ENCODE measurements at regions of chr14 and their contacts with region 1.

Region 1: DNA sequence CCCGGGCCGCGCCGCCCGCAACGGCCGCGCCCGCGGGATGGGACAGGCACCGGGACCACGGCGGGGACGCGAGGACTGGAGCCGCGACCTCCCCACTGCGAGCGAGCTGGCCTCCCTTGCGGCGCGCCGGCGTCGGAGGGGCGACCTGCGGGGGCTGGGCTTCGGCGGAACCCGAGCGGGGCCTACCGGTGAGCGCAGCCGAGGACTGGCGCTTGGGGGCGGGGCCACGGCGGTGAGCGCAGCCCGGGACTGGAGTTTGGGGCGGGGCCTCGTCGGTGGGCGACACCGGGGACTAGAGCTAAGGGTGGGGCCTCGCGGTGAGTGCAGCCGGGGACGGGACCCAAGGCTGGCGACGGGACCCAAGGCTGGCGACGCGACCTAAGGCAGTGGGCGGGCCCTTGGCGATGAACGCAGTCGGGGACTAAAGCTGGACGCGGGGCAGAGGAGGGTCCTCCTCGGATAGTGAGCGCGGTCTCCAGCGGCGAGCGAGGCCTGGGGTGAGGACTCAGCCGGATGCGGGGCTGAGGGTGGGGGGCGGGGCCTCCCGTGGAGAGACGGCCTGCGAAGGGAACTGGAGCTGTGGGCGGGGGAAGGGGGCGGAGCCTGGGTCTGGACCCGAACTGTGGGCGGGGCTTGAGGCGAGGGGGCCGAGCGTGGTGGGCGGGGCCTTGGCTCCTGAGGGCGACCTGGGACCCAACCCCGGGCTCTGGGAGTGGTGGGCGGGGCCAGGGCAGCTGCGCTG is at the start of gene BRF1:
- DNase-seq: peak; percentile 100
- ATAC-seq: peak; percentile 92
- H3K4me3 Mint-ChIP-seq: peak within 1 kb of the TSS; percentile 86
- H3K27ac Mint-ChIP-seq: peak within 1 kb of the TSS; percentile 86
- H3K4me1 Mint-ChIP-seq: peaks cover 39% of the 10 kb centered on the region
- H3K27me3 Mint-ChIP-seq: no peaks in the 10 kb centered on the region
- total RNA-seq, gene BRF1: 20.0 to 28.1 TPM

Region 2: GRCh38 chr14:104826189-104826860 is 474.6 kb before region 1 on chr14:
- CTCF ChIA-PET with region 1: no interaction called
- POLR2A ChIA-PET with region 1: no interaction called
- intact Hi-C with region 1: loop called in 1 of 2 experiments (anchors 2 kb)
- DNase-seq: peak; percentile 97
- ATAC-seq: peak; percentile 93
- H3K4me3 Mint-ChIP-seq: peak overlapping the region; percentile 73
- H3K27ac Mint-ChIP-seq: no peak overlapping the region
- H3K4me1 Mint-ChIP-seq: peaks cover 13% of the 10 kb centered on the region
- H3K27me3 Mint-ChIP-seq: peaks cover 13% of the 10 kb centered on the region

Region 3: DNA sequence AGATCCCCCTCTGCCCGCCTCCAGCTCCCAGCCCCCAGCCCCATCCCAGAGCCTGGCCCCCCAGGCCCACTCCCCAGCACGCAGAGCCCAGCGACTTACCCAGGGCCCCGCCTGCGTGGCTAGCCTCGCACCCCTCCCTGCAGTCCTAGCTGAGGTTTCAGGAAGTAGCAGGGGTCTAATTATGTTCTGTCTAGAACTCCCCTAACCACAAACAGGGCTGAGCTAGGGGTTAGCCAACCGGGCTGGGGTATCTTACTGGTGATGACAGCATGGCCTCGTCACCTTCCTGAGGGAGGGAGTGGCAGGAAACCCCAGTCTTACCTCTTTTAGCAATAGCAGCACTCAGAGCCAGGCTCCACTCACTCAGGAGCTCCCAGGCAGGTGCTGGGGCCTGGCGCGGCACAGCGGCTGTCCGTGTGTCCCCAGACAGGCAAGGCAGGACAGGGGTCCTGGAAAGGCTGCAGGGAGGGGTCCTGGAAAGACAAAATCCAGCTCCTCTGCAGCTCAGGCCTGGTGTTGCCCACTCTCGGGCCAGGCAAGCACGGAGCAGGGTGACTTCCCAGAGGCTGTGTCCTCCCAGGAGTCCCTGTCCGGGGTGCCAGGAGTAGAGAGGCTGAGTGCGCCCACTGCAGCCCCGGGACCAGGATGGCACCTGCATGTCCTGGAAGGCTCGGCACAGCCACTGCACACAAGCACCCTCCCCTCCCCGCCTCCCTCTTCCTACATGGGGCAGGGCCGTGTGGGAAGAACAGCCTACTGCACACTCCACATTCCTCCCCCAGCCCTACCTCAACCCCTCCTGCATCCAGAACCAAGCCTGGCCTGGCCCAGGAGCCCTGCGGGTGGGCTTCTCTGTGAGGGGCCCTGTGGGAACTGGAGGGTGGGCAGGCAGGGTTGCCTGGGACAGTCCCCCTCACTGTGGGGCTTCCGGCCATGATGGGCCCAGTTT is 235.4 kb before region 1 on chr14 and contains the start of gene GPR132:
- CTCF ChIA-PET with region 1: no interaction called
- POLR2A ChIA-PET with region 1: no interaction called
- intact Hi-C with region 1: loop called in 1 of 2 experiments (anchors 2 kb)
- DNase-seq: peak; percentile 93
- ATAC-seq: peak; percentile 78
- H3K4me3 Mint-ChIP-seq: peak within 1 kb of the TSS; percentile 92
- H3K27ac Mint-ChIP-seq: peak within 1 kb of the TSS; percentile 96
- H3K4me1 Mint-ChIP-seq: peaks cover 74% of the 10 kb centered on the region
- H3K27me3 Mint-ChIP-seq: no peaks in the 10 kb centered on the region
- total RNA-seq, gene GPR132: 27.7 to 35.4 TPM

Region 4: GRCh38 chr14:105248368-105248756 is 52.6 kb before region 1 on chr14 and contains the start of gene BTBD6:
- CTCF ChIA-PET with region 1: no interaction called
- POLR2A ChIA-PET with region 1: interaction called, 3 read pairs
- intact Hi-C with region 1: loop called in 1 of 2 experiments (anchors 1 kb)
- DNase-seq: peak; percentile 93
- ATAC-seq: peak; percentile 97
- H3K4me3 Mint-ChIP-seq: peak within 1 kb of the TSS; percentile 74
- H3K27ac Mint-ChIP-seq: peak within 1 kb of the TSS; percentile 51
- H3K4me1 Mint-ChIP-seq: peaks cover 15% of the 10 kb centered on the region
- H3K27me3 Mint-ChIP-seq: no peaks in the 10 kb centered on the region
- total RNA-seq, gene BTBD6: 18.9 to 23.2 TPM

Region 5: GRCh38 chr14:105267820-105268548 is 33.0 kb before region 1 on chr14:
- CTCF ChIA-PET with region 1: no interaction called
- POLR2A ChIA-PET with region 1: no interaction called
- intact Hi-C with region 1: no loop called
- DNase-seq: no peak
- ATAC-seq: no peak
- H3K4me3 Mint-ChIP-seq: no peak overlapping the region
- H3K27ac Mint-ChIP-seq: no peak overlapping the region
- H3K4me1 Mint-ChIP-seq: no peaks in the 10 kb centered on the region
- H3K27me3 Mint-ChIP-seq: no peaks in the 10 kb centered on the region

Region 6: GRCh38 chr14:105357626-105358025 is 56.7 kb after region 1 on chr14:
- CTCF ChIA-PET with region 1: no interaction called
- POLR2A ChIA-PET with region 1: no interaction called
- intact Hi-C with region 1: no loop called
- DNase-seq: no peak
- ATAC-seq: no peak
- H3K4me3 Mint-ChIP-seq: no peak overlapping the region
- H3K27ac Mint-ChIP-seq: no peak overlapping the region
- H3K4me1 Mint-ChIP-seq: no peaks in the 10 kb centered on the region
- H3K27me3 Mint-ChIP-seq: no peaks in the 10 kb centered on the region

Region 7: GRCh38 chr14:105414456-105415371 is 113.8 kb after region 1 on chr14:
- CTCF ChIA-PET with region 1: no interaction called
- POLR2A ChIA-PET with region 1: interaction called, 3 read pairs
- intact Hi-C with region 1: loop called in 1 of 2 experiments (anchors 5 kb)
- DNase-seq: peak; percentile 81
- ATAC-seq: peak; percentile 85
- H3K4me3 Mint-ChIP-seq: peak overlapping the region; percentile 61
- H3K27ac Mint-ChIP-seq: no peak overlapping the region
- H3K4me1 Mint-ChIP-seq: peaks cover 11% of the 10 kb centered on the region
- H3K27me3 Mint-ChIP-seq: peaks cover 17% of the 10 kb centered on the region

Measured in activated CD4-positive, alpha-beta T cell treated with anti-CD3 and anti-CD28 coated beads for 36 hours (primary cell).